ENCODE measurements at regions of chr2 and their contacts with region 1.

Region 1: GRCh38 chr2:118882709-118883210 is 35.3 kb upstream of the EN1 start:
- DNase-seq: no peak
- ATAC-seq: peak; percentile 93
- H3K4me3 ChIP-seq: no peak overlapping the region; the same call in 1 of the 2 replicates
- H3K27ac ChIP-seq: no peak overlapping the region
- H3K4me1 ChIP-seq: no peaks in the 10 kb centered on the region
- H3K27me3 ChIP-seq: no peaks in the 10 kb centered on the region
- CTCF ChIP-seq: peak; percentile 91 to 97 (median 97)
- EP300 ChIP-seq: no peak
- POLR2A ChIP-seq: no peak
- RAD21 ChIP-seq: peak; percentile 88

Region 2: DNA sequence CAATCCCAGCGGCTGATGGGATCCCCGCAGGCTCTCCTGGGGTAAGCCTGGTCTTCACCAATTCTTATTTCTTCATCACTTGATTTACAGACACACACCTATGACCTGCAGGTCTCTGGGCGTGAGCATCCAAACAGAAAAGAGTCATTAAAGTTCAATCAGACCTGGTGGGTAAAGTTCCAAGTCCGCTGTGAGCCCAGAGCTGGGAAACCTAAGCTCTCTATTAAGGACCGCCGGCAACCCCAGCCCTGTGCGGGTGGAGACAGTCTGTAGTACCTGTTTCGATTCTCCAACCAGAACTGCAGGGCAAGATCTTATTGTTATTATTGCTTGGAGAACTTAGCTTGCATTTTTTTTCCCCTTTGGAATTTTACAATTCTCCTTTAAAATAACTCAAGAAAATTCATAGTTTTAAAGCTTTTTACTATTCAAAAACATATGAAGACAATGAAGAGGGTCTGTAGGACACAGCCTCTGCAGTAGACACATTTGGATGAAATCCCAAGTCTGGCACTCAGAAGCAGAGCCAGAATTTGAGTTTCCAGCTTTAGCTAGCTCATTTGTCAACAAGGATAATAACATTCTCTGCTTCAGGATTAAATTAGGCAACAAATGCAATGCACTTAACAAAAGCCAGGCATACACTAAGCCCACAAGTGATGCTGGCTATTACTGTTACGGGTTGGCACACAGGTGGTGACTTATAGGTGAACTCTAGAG is 418.1 kb before region 1 on chr2:
- CTCF ChIA-PET with region 1: no interaction called
- POLR2A ChIA-PET with region 1: no interaction called
- RAD21 ChIA-PET with region 1: no interaction called
- SMC1A ChIA-PET with region 1: no interaction called
- in situ Hi-C with region 1: no loop called
- intact Hi-C with region 1: no loop called
- DNase-seq: no peak
- ATAC-seq: no peak
- H3K4me3 ChIP-seq: no peak overlapping the region
- H3K27ac ChIP-seq: no peak overlapping the region
- H3K4me1 ChIP-seq: no peaks in the 10 kb centered on the region
- H3K27me3 ChIP-seq: no peaks in the 10 kb centered on the region; a peak in 1 of 4 replicates
- CTCF ChIP-seq: no peak
- EP300 ChIP-seq: no peak
- POLR2A ChIP-seq: no peak
- RAD21 ChIP-seq: no peak

Region 3: GRCh38 chr2:118836411-118836930 is 46.3 kb before region 1 on chr2:
- CTCF ChIA-PET with region 1: no interaction called
- POLR2A ChIA-PET with region 1: no interaction called
- RAD21 ChIA-PET with region 1: no interaction called
- SMC1A ChIA-PET with region 1: no interaction called
- in situ Hi-C with region 1: no loop called
- intact Hi-C with region 1: no loop called
- DNase-seq: no peak
- ATAC-seq: no peak
- H3K4me3 ChIP-seq: no peak overlapping the region
- H3K27ac ChIP-seq: no peak overlapping the region
- H3K4me1 ChIP-seq: no peaks in the 10 kb centered on the region
- H3K27me3 ChIP-seq: peaks cover 13 to 25% of the 10 kb centered on the region in 2 experiments
- CTCF ChIP-seq: no peak
- EP300 ChIP-seq: no peak
- POLR2A ChIP-seq: no peak
- RAD21 ChIP-seq: no peak

Region 4: GRCh38 chr2:118865106-118865505 is 17.7 kb before region 1 on chr2:
- CTCF ChIA-PET with region 1: interaction called, 17 read pairs
- POLR2A ChIA-PET with region 1: no interaction called
- RAD21 ChIA-PET with region 1: no interaction called
- SMC1A ChIA-PET with region 1: interaction called, 3 read pairs
- in situ Hi-C with region 1: no loop called
- intact Hi-C with region 1: no loop called
- DNase-seq: peak; percentile 19
- ATAC-seq: peak; percentile 99
- H3K4me3 ChIP-seq: no peak overlapping the region
- H3K27ac ChIP-seq: no peak overlapping the region
- H3K4me1 ChIP-seq: no peaks in the 10 kb centered on the region
- H3K27me3 ChIP-seq: peaks cover 2 to 7% of the 10 kb centered on the region in 2 experiments; a peak in 3 of 4 replicates
- CTCF ChIP-seq: peak; percentile 62 to 79 (median 66); a peak in 5 of 6 replicates
- EP300 ChIP-seq: no peak
- POLR2A ChIP-seq: no peak
- RAD21 ChIP-seq: peak; percentile 77

Region 5: DNA sequence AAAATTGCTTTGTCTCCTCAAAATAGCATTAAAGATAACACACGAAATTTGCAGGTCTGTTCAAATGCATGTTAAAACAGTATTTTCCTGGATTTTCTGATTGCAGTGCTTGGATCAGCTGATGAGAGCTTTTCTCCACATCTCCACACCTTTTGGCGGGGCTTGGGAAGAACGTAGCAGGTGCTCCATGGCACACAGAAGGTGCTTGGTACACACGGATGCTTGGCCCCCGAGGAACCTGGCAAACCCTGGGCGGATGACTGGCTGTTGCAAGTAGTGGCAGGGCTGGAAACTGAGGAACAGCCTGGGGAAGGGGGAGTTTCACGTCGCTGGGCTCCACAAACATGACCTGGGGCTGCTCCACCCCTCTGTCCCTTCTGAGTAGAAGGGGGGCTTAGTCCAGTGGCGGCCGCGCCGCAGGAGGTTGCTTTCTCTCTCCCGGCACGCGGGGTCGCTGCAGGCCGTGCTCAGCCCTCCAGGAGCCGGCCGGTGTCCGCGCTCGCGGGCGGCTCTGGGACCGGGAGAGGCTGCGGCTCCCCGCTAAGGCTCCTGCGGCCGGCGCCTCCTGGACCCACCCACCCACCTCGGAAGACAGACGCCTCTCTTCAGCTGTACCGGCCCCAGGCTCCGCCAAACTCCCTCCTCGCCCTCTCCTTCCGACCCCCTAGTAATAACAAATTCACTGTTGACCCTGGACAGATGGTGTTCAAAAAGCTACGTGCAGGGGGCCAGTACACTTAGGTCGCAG is 128.6 kb after region 1 on chr2:
- CTCF ChIA-PET with region 1: interaction called, 5 read pairs
- POLR2A ChIA-PET with region 1: no interaction called
- RAD21 ChIA-PET with region 1: interaction called, 29 read pairs
- SMC1A ChIA-PET with region 1: interaction called, 13 read pairs
- in situ Hi-C with region 1: no loop called
- intact Hi-C with region 1: loop called (anchors 10 kb)
- DNase-seq: no peak
- ATAC-seq: peak; percentile 75
- H3K4me3 ChIP-seq: no peak overlapping the region
- H3K27ac ChIP-seq: no peak overlapping the region
- H3K4me1 ChIP-seq: no peaks in the 10 kb centered on the region
- H3K27me3 ChIP-seq: peaks cover 8 to 11% of the 10 kb centered on the region in 2 experiments
- CTCF ChIP-seq: peak; percentile 34 to 47 (median 45); a peak in 4 of 6 replicates
- EP300 ChIP-seq: no peak
- POLR2A ChIP-seq: no peak
- RAD21 ChIP-seq: peak; percentile 51

Region 6: GRCh38 chr2:119086327-119086726 is 203.6 kb after region 1 on chr2:
- CTCF ChIA-PET with region 1: interaction called, 10 read pairs
- POLR2A ChIA-PET with region 1: no interaction called
- RAD21 ChIA-PET with region 1: no interaction called
- SMC1A ChIA-PET with region 1: no interaction called
- in situ Hi-C with region 1: no loop called
- intact Hi-C with region 1: no loop called
- DNase-seq: no peak
- ATAC-seq: no peak
- H3K4me3 ChIP-seq: no peak overlapping the region
- H3K27ac ChIP-seq: no peak overlapping the region
- H3K4me1 ChIP-seq: no peaks in the 10 kb centered on the region
- H3K27me3 ChIP-seq: peaks cover 0 to 3% of the 10 kb centered on the region in 2 experiments; a peak in 2 of 4 replicates
- CTCF ChIP-seq: no peak
- EP300 ChIP-seq: no peak
- POLR2A ChIP-seq: no peak
- RAD21 ChIP-seq: no peak

Region 7: DNA sequence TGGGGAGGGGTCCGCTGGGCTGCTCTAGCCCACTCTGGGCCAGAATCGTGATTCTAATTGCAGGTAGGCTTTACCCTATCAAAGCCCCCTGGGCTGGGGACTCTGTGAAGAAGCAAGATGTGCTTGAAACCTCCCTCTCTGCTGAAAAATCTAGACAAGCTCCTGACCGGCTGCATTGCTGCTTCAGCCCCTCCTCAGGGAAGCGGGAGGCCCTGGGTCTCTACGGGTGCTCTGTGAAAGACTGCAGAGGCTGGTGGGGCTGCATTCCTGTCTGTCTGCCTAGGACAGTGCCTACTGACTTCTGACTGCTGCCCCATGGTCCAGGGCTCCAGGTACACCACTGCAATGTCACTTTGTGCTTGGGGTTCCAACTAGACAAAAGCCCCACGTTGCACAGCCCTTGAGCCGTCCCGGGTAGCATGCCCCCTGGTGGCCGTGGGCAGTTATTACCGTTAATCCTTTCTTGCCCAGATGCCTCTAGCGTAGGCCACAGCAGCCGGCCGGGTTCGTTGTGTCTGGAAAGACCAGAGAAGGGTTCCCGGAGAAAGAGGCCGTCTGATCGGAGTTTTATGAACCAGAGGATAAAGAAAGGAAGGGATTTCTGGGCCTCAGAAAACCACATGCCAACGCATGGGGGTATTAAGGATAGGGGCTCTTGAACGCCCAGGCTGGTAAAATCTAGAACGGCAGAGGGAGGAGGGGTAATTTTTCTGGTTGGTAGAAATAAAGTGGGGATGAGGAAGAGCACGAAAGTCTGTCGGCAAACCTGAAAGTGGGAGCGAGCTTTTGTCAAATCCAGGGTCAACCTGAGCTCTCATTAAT is 291.7 kb after region 1 on chr2:
- CTCF ChIA-PET with region 1: interaction called, 39 read pairs
- POLR2A ChIA-PET with region 1: no interaction called
- RAD21 ChIA-PET with region 1: interaction called, 4 read pairs
- SMC1A ChIA-PET with region 1: interaction called, 11 read pairs
- in situ Hi-C with region 1: loop called (anchors 5 kb)
- intact Hi-C with region 1: loop called (anchors 1 kb)
- DNase-seq: no peak
- ATAC-seq: peak; percentile 97
- H3K4me3 ChIP-seq: no peak overlapping the region
- H3K27ac ChIP-seq: no peak overlapping the region
- H3K4me1 ChIP-seq: no peaks in the 10 kb centered on the region
- H3K27me3 ChIP-seq: no peaks in the 10 kb centered on the region
- CTCF ChIP-seq: peak; percentile 71 to 88 (median 84)
- EP300 ChIP-seq: no peak
- POLR2A ChIP-seq: no peak
- RAD21 ChIP-seq: peak; percentile 50

Region 8: GRCh38 chr2:119305497-119306195 is 422.9 kb after region 1 on chr2:
- CTCF ChIA-PET with region 1: interaction called, 11 read pairs
- POLR2A ChIA-PET with region 1: no interaction called
- RAD21 ChIA-PET with region 1: interaction called, 6 read pairs
- SMC1A ChIA-PET with region 1: interaction called, 7 read pairs
- in situ Hi-C with region 1: loop called (anchors 5 kb)
- intact Hi-C with region 1: no loop called
- DNase-seq: no peak
- ATAC-seq: no peak
- H3K4me3 ChIP-seq: no peak overlapping the region
- H3K27ac ChIP-seq: no peak overlapping the region
- H3K4me1 ChIP-seq: no peaks in the 10 kb centered on the region
- H3K27me3 ChIP-seq: no peaks in the 10 kb centered on the region
- CTCF ChIP-seq: no peak
- EP300 ChIP-seq: no peak
- POLR2A ChIP-seq: no peak
- RAD21 ChIP-seq: no peak

Region 9: GRCh38 chr2:119476301-119477021 is 593.7 kb after region 1 on chr2:
- CTCF ChIA-PET with region 1: interaction called, 5 read pairs
- POLR2A ChIA-PET with region 1: no interaction called
- RAD21 ChIA-PET with region 1: interaction called, 6 read pairs
- SMC1A ChIA-PET with region 1: interaction called, 4 read pairs
- in situ Hi-C with region 1: loop called (anchors 10 kb)
- intact Hi-C with region 1: loop called (anchors 5 kb)
- DNase-seq: no peak
- ATAC-seq: peak; percentile 94
- H3K4me3 ChIP-seq: no peak overlapping the region
- H3K27ac ChIP-seq: no peak overlapping the region
- H3K4me1 ChIP-seq: no peaks in the 10 kb centered on the region
- H3K27me3 ChIP-seq: no peaks in the 10 kb centered on the region
- CTCF ChIP-seq: peak; percentile 88 to 97 (median 91)
- EP300 ChIP-seq: no peak
- POLR2A ChIP-seq: no peak
- RAD21 ChIP-seq: peak; percentile 95